CD4-positive, alpha-beta T cell (primary cell): ENCODE measurements at regions of chr15 and their contacts with region 1.

Region 1: GRCh38 chr15:27679731-27680471 is 419.2 kb downstream of the OCA2 start:
- DNase-seq: no peak
- ATAC-seq: no peak
- H3K4me3 ChIP-seq: no peak overlapping the region
- H3K4me3 Mint-ChIP-seq: no peak overlapping the region
- H3K27ac ChIP-seq: no peak overlapping the region
- H3K27ac Mint-ChIP-seq: no peak overlapping the region
- H3K4me1 ChIP-seq: no peaks in the 10 kb centered on the region
- H3K4me1 Mint-ChIP-seq: no peaks in the 10 kb centered on the region
- H3K27me3 ChIP-seq: no peaks in the 10 kb centered on the region
- H3K27me3 Mint-ChIP-seq: no peaks in the 10 kb centered on the region
- CTCF ChIP-seq: no peak

Region 2: GRCh38 chr15:27623560-27624305 is 56.2 kb before region 1 on chr15:
- CTCF ChIA-PET with region 1: no interaction called
- POLR2A ChIA-PET with region 1: no interaction called
- intact Hi-C with region 1: loop called in 1 of 2 experiments (anchors 10 kb)
- DNase-seq: no peak
- ATAC-seq: no peak
- H3K4me3 ChIP-seq: no peak overlapping the region
- H3K4me3 Mint-ChIP-seq: no peak overlapping the region
- H3K27ac ChIP-seq: no peak overlapping the region
- H3K27ac Mint-ChIP-seq: no peak overlapping the region
- H3K4me1 ChIP-seq: no peaks in the 10 kb centered on the region
- H3K4me1 Mint-ChIP-seq: no peaks in the 10 kb centered on the region
- H3K27me3 ChIP-seq: no peaks in the 10 kb centered on the region
- H3K27me3 Mint-ChIP-seq: no peaks in the 10 kb centered on the region
- CTCF ChIP-seq: no peak